ENCODE measurements at regions of chr3 and their contacts with region 1.

Region 1: DNA sequence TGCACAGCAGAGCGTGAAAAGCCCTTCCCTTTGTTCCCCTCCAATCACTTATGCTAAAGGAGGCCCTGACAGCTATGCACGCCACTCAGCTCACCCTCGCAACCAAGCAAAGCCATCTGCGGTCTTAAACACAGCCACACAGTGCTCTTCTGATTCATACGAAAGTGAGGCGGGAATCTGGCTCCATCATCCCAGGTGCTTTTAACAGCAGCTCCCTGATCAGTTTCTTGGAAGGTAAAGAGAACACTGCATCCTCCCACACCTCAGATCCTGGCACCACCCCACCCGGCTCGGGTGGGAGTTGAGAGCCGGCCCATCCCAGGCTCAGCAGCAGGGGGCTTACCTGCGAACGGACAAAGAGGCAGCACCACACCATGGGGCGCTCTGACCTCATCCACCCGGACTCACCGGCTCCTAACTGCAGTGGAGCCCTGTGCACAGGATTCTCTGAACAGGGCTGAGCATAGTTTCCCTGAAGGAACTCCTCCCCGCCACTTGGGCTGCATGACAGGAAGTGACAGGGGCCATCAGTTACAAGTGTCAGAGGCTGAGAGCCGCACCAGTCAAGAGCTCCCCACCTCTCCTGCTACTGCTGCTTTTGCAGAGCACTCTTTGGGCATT is 114.3 kb upstream of the ARHGEF3 start:
- DNase-seq: peak; percentile 87
- H3K4me3 Mint-ChIP-seq: peak overlapping the region; percentile 74
- H3K27ac Mint-ChIP-seq: peak overlapping the region; percentile 92
- H3K4me1 Mint-ChIP-seq: peaks cover 69% of the 10 kb centered on the region
- H3K27me3 Mint-ChIP-seq: no peaks in the 10 kb centered on the region

Region 2: GRCh38 chr3:56753206-56753820 is 162.8 kb before region 1 on chr3:
- CTCF ChIA-PET with region 1: interaction called, 3 read pairs
- POLR2A ChIA-PET with region 1: interaction called, 4 read pairs
- intact Hi-C with region 1: loop called (anchors 2 kb)
- DNase-seq: peak; percentile 73
- H3K4me3 Mint-ChIP-seq: peak overlapping the region; percentile 18
- H3K27ac Mint-ChIP-seq: peak overlapping the region; percentile 23
- H3K4me1 Mint-ChIP-seq: peaks cover 57% of the 10 kb centered on the region
- H3K27me3 Mint-ChIP-seq: no peaks in the 10 kb centered on the region

Region 3: DNA sequence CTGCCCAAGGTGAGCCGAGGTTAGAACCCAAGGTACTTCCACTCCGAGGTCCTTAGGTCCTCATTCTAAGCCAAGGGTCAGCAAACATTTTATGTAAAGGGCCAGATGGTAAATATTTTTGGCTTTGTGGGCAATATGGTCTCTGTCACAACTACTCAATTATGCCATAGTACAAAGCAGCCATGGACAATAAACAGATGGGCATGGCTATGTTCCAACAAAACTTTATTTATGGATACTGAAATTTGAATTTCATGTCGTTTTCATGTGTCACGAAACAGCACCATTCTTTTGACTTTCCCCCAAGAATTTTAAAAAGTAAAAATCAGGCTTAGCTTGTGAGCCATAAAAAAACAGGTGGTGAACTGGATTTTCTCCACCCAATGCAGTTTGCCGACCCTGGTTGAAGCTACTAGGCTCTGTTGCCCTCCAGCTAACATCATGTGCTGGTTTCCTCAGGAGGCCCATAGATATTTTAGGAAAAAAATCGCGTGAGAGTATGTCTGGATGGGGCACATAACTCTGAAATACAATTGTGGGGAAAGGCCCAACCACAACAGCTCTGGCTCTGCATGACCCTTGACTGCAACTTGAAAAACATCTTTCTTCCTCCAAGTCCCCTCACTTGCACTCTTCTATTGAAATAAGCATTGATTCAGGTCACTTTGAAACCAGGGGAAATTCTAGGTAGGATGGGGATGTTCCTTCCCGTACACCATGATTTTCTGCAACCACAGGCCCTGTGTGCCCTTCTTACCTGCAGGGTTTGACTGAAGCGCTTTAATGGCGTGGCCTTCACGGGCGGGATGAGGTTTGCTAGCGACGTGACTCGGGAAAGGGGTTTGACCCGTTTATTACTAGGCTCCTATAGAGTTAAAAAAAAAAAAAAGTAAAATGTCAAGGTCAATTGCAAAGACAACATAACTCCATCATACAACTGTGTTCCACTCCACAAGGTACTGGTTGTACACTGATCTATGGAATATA is 142.8 kb before region 1 on chr3:
- CTCF ChIA-PET with region 1: no interaction called
- POLR2A ChIA-PET with region 1: no interaction called
- intact Hi-C with region 1: no loop called
- DNase-seq: no peak
- H3K4me3 Mint-ChIP-seq: no peak overlapping the region
- H3K27ac Mint-ChIP-seq: no peak overlapping the region
- H3K4me1 Mint-ChIP-seq: peaks cover 77% of the 10 kb centered on the region
- H3K27me3 Mint-ChIP-seq: no peaks in the 10 kb centered on the region

Region 4: DNA sequence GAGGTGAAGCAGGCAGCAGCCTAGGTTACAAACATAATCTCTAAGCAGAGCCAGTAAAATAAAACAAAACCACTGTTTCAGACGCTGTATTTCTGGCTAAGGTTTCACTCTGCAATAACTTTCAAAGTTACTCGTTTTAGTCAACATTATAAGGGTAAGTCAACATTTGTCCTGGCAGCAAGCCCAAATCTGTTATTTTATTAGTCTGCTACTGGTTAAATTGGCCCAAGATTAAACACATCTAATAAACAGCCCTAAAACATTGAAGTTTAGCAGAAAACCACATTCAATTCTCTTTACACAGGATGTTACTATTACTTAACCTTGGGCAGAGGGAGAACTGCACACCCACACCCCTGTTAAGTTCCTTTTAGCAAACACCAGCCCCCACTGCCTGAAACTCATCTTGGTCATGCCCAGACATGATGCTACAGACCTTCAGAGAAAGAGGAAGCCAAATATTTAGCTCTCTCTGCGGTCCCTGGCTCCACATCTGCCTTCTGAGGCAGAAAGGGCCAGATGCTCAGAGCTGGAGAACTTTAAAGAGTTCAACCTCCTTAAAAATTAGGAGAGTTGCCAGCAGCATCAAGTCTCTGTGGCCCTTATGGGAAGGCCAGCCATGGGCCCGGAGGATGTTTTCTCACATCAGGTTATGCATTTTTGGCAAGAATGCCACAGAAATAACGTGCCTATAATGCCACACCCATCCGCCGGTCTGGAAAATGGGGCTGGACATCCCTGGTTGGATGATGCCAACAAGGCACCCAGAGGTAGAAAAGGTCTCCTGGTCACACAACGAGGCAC is 132.2 kb before region 1 on chr3:
- CTCF ChIA-PET with region 1: no interaction called
- POLR2A ChIA-PET with region 1: interaction called, 11 read pairs
- intact Hi-C with region 1: no loop called
- DNase-seq: peak; percentile 84
- H3K4me3 Mint-ChIP-seq: peak overlapping the region; percentile 69
- H3K27ac Mint-ChIP-seq: peak overlapping the region; percentile 95
- H3K4me1 Mint-ChIP-seq: peaks cover 97% of the 10 kb centered on the region
- H3K27me3 Mint-ChIP-seq: no peaks in the 10 kb centered on the region

Region 5: GRCh38 chr3:56825567-56826438 is 90.3 kb before region 1 on chr3:
- CTCF ChIA-PET with region 1: no interaction called
- POLR2A ChIA-PET with region 1: no interaction called
- intact Hi-C with region 1: no loop called
- DNase-seq: no peak
- H3K4me3 Mint-ChIP-seq: no peak overlapping the region
- H3K27ac Mint-ChIP-seq: no peak overlapping the region
- H3K4me1 Mint-ChIP-seq: peaks cover 48% of the 10 kb centered on the region
- H3K27me3 Mint-ChIP-seq: no peaks in the 10 kb centered on the region

Region 6: GRCh38 chr3:56878074-56878473 is 38.0 kb before region 1 on chr3:
- CTCF ChIA-PET with region 1: interaction called, 4 read pairs
- POLR2A ChIA-PET with region 1: interaction called, 12 read pairs
- intact Hi-C with region 1: loop called (anchors 1 kb)
- DNase-seq: peak; percentile 79
- H3K4me3 Mint-ChIP-seq: peak overlapping the region; percentile 57
- H3K27ac Mint-ChIP-seq: peak overlapping the region; percentile 85
- H3K4me1 Mint-ChIP-seq: peaks cover 80% of the 10 kb centered on the region
- H3K27me3 Mint-ChIP-seq: no peaks in the 10 kb centered on the region

Region 7: DNA sequence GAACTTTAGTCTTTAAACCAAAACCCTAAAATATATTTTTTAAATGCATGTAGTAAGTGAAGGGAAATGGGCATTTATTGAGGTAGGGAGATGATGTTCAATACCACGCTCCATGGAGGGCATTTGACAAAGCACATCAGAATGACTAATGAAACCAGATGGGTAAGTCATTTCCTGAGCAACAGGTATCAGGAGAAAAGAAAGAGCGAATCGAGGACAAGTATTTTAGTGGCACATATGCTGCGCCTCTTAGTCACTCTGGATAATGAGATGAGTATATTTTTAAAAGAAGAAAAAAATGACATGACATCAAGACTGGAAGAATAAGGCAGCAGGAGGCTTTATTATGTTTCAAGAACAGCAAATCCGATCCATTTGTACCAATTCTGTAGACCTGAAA is 14.6 kb after region 1 on chr3:
- CTCF ChIA-PET with region 1: interaction called, 4 read pairs
- POLR2A ChIA-PET with region 1: interaction called, 3 read pairs
- intact Hi-C with region 1: loop called (anchors 1 kb)
- DNase-seq: peak; percentile 34
- H3K4me3 Mint-ChIP-seq: peak overlapping the region; percentile 16
- H3K27ac Mint-ChIP-seq: peak overlapping the region; percentile 74
- H3K4me1 Mint-ChIP-seq: peaks cover 71% of the 10 kb centered on the region
- H3K27me3 Mint-ChIP-seq: no peaks in the 10 kb centered on the region

Region 8: DNA sequence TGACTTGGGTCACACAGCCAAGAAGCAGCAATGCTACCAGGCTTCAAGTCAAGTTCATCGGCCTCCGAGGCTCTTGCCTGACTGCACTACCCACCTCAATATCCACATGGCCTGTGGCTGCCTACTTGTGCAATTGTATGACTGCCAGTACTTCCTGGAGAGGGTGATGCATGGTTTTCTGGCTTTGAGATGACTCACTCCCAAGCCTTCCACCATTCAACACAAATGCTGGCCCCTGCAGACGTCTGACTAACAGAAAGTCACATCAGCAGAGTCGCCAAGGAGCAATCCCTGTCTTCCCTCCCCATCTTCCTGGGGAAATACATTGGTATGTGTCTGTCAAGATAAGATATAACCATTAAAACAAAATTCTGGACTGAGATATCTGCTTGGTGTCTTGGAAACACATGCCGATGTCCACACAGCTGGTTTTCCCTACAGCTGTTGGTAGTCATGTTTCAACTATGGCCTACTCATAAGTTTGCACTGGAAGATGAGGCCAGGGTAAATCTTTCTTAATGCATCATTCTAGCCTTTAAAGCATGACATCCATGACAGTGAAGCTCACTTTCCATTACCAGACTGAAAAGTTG is 64.8 kb after region 1 on chr3:
- CTCF ChIA-PET with region 1: interaction called, 5 read pairs
- POLR2A ChIA-PET with region 1: no interaction called
- intact Hi-C with region 1: loop called (anchors 1 kb)
- DNase-seq: peak; percentile 83
- H3K4me3 Mint-ChIP-seq: no peak overlapping the region
- H3K27ac Mint-ChIP-seq: peak overlapping the region; percentile 72
- H3K4me1 Mint-ChIP-seq: peaks cover 23% of the 10 kb centered on the region
- H3K27me3 Mint-ChIP-seq: no peaks in the 10 kb centered on the region